K562 (cell line): ENCODE measurements at regions of chr20 and their contacts with region 1.

Region 1: GRCh38 chr20:38321959-38322598 is 18.1 kb downstream of the BPI start:
- DNase-seq: peak; percentile 49 to 64 (median 62)
- ATAC-seq: peak; percentile 81
- H3K4me3 ChIP-seq: no peak overlapping the region
- H3K27ac ChIP-seq: no peak overlapping the region
- H3K4me1 ChIP-seq: no peaks in the 10 kb centered on the region
- H3K27me3 ChIP-seq: peaks cover 25 to 36% of the 10 kb centered on the region in 2 experiments; a peak in 3 of 5 replicates
- CTCF ChIP-seq: peak; percentile 74 to 80 (median 75)
- EP300 ChIP-seq: no peak
- POLR2A ChIP-seq: no peak
- RAD21 ChIP-seq: peak; percentile 52 to 71; a peak in 3 of 4 replicates

Region 2: DNA sequence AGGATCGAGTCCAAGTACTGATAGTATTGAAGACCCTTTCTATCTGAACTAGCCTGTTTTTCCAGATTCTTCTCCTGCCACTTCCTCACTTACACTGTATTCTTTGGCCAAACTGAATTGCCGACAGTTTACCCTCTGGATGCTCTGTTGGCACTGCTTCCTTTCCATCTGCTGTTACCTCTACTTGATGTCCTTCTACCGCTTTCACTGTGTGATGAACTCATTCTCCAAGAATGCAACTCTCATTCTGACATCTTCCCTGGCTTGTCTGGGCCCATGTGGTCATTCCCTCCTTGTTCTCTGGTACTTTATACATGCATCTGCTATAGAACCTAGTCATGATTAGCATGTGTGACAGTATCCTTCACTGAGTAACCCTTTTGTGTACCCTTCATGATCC is 272.3 kb before region 1 on chr20:
- CTCF ChIA-PET with region 1: no interaction called
- POLR2A ChIA-PET with region 1: no interaction called
- in situ Hi-C with region 1: no loop called
- intact Hi-C with region 1: no loop called
- DNase-seq: no peak
- ATAC-seq: no peak
- H3K4me3 ChIP-seq: no peak overlapping the region
- H3K27ac ChIP-seq: peak overlapping the region; percentile 9; the same call in 1 of the 3 replicates
- H3K4me1 ChIP-seq: no peaks in the 10 kb centered on the region; a peak in 1 of 5 replicates
- H3K27me3 ChIP-seq: no peaks in the 10 kb centered on the region
- CTCF ChIP-seq: no peak
- EP300 ChIP-seq: no peak
- POLR2A ChIP-seq: no peak
- RAD21 ChIP-seq: no peak

Region 3: DNA sequence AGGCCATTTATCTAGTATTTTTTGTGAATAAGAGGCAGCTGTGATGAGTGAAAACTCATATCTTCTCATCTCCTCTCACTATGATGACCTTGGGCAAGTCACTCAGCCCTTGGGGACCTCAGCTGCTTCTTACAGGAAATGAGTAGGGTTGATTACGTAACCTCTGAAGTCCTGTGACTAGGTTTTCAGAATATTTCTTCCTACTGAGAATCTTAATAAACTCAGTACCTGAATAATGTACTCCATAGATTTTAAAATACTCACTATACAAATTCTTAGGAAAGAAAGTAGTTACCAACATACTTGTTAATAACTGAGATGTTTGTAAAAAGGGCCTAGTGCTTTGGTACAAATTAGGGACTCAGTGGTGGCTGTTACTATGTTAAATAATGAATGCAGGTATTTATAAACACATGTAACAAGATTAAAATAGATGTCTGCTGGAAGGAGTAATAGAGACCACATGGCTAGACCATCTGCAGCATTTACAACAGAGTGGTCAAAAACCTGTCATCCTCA is 227.6 kb before region 1 on chr20:
- CTCF ChIA-PET with region 1: no interaction called
- POLR2A ChIA-PET with region 1: no interaction called
- in situ Hi-C with region 1: no loop called
- intact Hi-C with region 1: no loop called
- DNase-seq: peak in 2 of 4 experiments; percentile 59 to 78
- ATAC-seq: peak; percentile 74
- H3K4me3 ChIP-seq: no peak overlapping the region
- H3K27ac ChIP-seq: peak overlapping the region; percentile 62; the same call in 1 of the 3 replicates
- H3K4me1 ChIP-seq: peaks cover 4 to 51% of the 10 kb centered on the region in 2 experiments; a peak in 4 of 5 replicates
- H3K27me3 ChIP-seq: no peaks in the 10 kb centered on the region
- CTCF ChIP-seq: no peak
- EP300 ChIP-seq: peak; percentile 66
- POLR2A ChIP-seq: no peak
- RAD21 ChIP-seq: no peak

Region 4: GRCh38 chr20:38229376-38230252 is 92.5 kb before region 1 on chr20:
- CTCF ChIA-PET with region 1: no interaction called
- POLR2A ChIA-PET with region 1: no interaction called
- in situ Hi-C with region 1: no loop called
- intact Hi-C with region 1: loop called (anchors 5 kb)
- DNase-seq: peak in 3 of 4 experiments; percentile 28 to 57 (median 51)
- ATAC-seq: peak; percentile 45; the same call in 2 of the 3 replicates
- H3K4me3 ChIP-seq: no peak overlapping the region
- H3K27ac ChIP-seq: no peak overlapping the region
- H3K4me1 ChIP-seq: no peaks in the 10 kb centered on the region
- H3K27me3 ChIP-seq: peaks cover 7 to 42% of the 10 kb centered on the region in 2 experiments; a peak in 4 of 5 replicates
- CTCF ChIP-seq: peak; percentile 43 to 52 (median 48); a peak in 5 of 6 replicates
- EP300 ChIP-seq: no peak
- POLR2A ChIP-seq: no peak
- RAD21 ChIP-seq: peak in 1 of 2 experiments; percentile 40; a peak in 2 of 4 replicates